CD8-positive, alpha-beta T cell (primary cell): ENCODE measurements at regions of chr20 and their contacts with region 1.

Region 1: DNA sequence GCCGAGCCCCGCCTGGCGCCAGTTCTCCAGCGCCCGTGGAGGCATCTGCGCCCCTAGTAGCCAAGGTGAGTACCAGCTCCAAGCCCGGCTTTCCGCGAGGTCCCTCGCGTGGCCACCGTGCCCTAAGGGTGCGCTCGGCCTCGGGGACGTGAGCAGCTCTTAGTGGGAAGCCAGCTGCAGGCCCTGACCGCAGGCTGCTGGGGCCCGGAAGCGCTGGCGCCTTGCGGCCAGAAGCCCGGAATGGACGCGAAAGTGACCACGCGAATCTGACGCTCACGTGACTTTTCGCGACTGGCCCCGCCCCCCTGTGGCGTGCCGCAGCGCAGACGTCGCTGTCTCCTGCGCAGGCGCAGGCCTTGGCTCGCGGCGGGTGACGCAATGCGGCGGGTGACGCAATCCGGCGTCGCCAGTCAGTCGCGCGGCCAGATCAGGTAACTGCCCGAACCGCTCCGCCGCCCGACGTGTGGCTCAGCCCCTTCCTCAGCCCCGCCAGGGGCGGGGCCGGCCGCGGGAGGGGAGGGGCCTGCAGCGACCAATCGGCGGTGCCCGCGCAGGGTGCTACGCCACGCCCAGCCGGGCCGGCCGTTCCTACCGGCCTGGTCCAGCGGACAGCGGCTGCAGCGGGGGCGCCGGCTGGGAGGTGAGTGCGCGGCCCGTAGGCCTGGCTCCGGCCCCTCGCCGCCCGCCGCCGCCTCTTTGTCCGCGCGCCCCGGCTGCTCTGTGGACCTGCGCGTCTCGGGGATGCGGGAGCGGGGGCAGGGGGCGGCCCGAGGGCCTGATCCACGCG is at the start of gene GZF1:
- DNase-seq: peak; percentile 96 to 99 (median 98)
- ATAC-seq: peak; percentile 74
- H3K4me3 ChIP-seq: peak within 1 kb of the TSS; percentile 86 to 95
- H3K4me3 Mint-ChIP-seq: peak within 1 kb of the TSS; percentile 93
- H3K27ac ChIP-seq: peak within 1 kb of the TSS; percentile 92 to 97
- H3K27ac Mint-ChIP-seq: peak within 1 kb of the TSS; percentile 95
- H3K4me1 ChIP-seq: peaks cover 41% of the 10 kb centered on the region
- H3K4me1 Mint-ChIP-seq: peaks cover 62% of the 10 kb centered on the region
- H3K27me3 ChIP-seq: no peaks in the 10 kb centered on the region
- H3K27me3 Mint-ChIP-seq: no peaks in the 10 kb centered on the region
- CTCF ChIP-seq: peak; percentile 43
- total RNA-seq, gene GZF1: 44.9 to 49.5 TPM

Region 2: DNA sequence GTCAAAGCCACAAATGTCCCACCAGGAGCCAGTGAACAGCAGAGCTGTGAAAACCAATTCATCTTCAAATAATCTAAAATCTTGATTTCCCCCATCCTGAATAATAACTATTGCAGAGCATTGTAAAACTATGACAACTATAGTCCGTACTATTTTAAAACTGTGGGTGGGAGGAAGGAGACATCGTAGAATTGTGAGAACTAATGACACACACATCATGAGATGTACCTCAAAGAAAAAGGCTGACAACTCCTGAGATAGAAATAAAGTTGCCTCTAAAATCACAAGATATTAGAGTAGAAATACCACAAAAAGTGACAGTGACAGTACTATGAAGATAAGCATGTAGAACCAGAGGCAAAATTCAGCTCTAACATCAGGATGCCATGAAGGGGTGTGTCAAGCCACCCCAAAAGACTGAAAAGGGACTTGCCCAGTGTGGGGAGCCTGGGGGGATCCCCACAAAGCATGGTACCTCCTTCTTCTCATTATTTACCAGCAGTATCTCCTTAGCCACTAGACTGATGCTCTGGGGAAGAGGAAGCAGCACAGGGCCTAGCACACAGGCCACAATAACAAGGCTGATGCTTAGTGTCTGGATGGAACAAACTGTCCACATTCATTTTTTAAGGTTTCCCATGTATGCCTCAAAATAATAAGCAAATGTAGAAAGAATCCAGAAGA is 46.1 kb after region 1 on chr20:
- CTCF ChIA-PET with region 1: no interaction called
- POLR2A ChIA-PET with region 1: interaction called, 3 read pairs
- intact Hi-C with region 1: loop called in 1 of 2 experiments (anchors 2 kb)
- DNase-seq: peak in 3 of 9 experiments; percentile 45 to 71 (median 64)
- ATAC-seq: peak; percentile 98
- H3K4me3 ChIP-seq: no peak overlapping the region
- H3K4me3 Mint-ChIP-seq: peak overlapping the region; percentile 20
- H3K27ac ChIP-seq: no peak overlapping the region
- H3K27ac Mint-ChIP-seq: peak overlapping the region; percentile 78
- H3K4me1 ChIP-seq: peaks cover 7% of the 10 kb centered on the region
- H3K4me1 Mint-ChIP-seq: peaks cover 51% of the 10 kb centered on the region
- H3K27me3 ChIP-seq: no peaks in the 10 kb centered on the region
- H3K27me3 Mint-ChIP-seq: no peaks in the 10 kb centered on the region
- CTCF ChIP-seq: no peak

Region 3: GRCh38 chr20:23420943-23421931 is 59.4 kb after region 1 on chr20 and contains the start of gene NAPB:
- CTCF ChIA-PET with region 1: interaction called, 8 read pairs
- POLR2A ChIA-PET with region 1: interaction called, 14 read pairs
- intact Hi-C with region 1: loop called (anchors 1 kb)
- DNase-seq: peak; percentile 85 to 95 (median 93)
- ATAC-seq: peak; percentile 98
- H3K4me3 ChIP-seq: peak within 1 kb of the TSS; percentile 85 to 96
- H3K4me3 Mint-ChIP-seq: peak within 1 kb of the TSS; percentile 87
- H3K27ac ChIP-seq: peak within 1 kb of the TSS; percentile 71 to 76
- H3K27ac Mint-ChIP-seq: peak within 1 kb of the TSS; percentile 89
- H3K4me1 ChIP-seq: peaks cover 23% of the 10 kb centered on the region
- H3K4me1 Mint-ChIP-seq: peaks cover 67% of the 10 kb centered on the region
- H3K27me3 ChIP-seq: peaks cover 0 to 4% of the 10 kb centered on the region in 2 experiments
- H3K27me3 Mint-ChIP-seq: no peaks in the 10 kb centered on the region
- CTCF ChIP-seq: peak; percentile 21
- total RNA-seq, gene NAPB: 10.9 to 11.7 TPM

Region 4: GRCh38 chr20:25247956-25248785 is 1886.4 kb after region 1 on chr20 and contains the start of gene PYGB:
- CTCF ChIA-PET with region 1: no interaction called
- POLR2A ChIA-PET with region 1: no interaction called
- intact Hi-C with region 1: loop called (anchors 5 kb)
- DNase-seq: peak; percentile 65 to 87 (median 70)
- ATAC-seq: peak; percentile 88
- H3K4me3 ChIP-seq: peak within 1 kb of the TSS; percentile 97 to 99
- H3K4me3 Mint-ChIP-seq: peak within 1 kb of the TSS; percentile 93
- H3K27ac ChIP-seq: peak within 1 kb of the TSS; percentile 53 to 80
- H3K27ac Mint-ChIP-seq: peak within 1 kb of the TSS; percentile 91
- H3K4me1 ChIP-seq: peaks cover 29% of the 10 kb centered on the region
- H3K4me1 Mint-ChIP-seq: peaks cover 54% of the 10 kb centered on the region
- H3K27me3 ChIP-seq: no peaks in the 10 kb centered on the region
- H3K27me3 Mint-ChIP-seq: no peaks in the 10 kb centered on the region
- CTCF ChIP-seq: no peak
- total RNA-seq, gene PYGB: 35.2 to 39.2 TPM